HepG2 (cell line): ENCODE measurements at regions of chr1 and their contacts with region 1.

Region 1: DNA sequence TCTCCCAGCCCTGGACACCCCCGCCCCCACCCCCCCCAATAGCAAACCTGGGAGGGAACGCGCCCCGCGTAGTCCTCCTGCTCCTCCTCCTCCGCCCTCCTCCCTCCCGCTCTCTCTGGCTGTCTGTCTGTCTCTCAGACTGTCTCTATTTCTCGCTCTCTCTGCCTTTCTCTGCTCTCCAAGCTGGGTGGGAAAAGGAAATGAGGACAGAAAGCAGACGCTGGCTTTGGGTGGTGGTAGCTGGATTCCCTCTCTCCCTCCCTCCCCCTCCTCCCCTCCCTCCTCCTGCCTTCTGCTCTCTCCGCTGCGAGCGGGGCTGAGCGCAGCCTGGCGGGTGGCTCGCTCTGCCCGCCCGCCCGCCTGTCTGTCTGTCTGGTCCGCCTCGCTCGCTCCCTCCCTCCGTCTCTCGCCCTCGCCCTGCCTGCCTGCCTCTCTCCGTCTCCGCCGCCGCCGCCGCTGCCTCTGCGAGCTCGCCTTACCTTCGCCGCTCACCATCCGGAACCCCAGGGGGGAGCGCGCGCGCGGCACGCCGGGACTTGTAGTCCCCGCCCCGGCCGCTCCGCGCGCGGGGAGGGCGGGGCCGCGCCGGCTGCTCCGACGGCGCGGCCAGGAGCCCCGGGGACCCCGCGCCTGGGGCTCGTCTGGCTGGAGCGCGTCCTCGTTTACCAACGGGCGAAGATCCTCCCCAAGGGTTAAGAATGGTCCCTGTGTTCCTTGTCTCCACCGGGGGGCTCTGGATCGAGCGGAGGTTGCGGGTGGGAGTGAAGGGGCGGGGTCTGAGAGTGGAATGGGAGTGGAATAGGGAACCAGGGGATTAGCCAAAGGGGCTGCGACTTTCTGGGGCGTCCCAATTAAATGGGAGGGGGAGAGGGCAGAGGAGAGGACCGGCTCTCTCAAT is at the start of gene AHDC1:
- DNase-seq: peak; percentile 74
- ATAC-seq: peak; percentile 52
- H3K4me3 ChIP-seq: peak within 1 kb of the TSS; percentile 66 to 86 (median 83)
- H3K27ac ChIP-seq: peak within 1 kb of the TSS; percentile 47
- H3K4me1 ChIP-seq: peaks cover 80% of the 10 kb centered on the region
- H3K27me3 ChIP-seq: no peaks in the 10 kb centered on the region; a peak in 1 of 5 replicates
- CTCF ChIP-seq: peak; percentile 38
- EP300 ChIP-seq: no peak
- POLR2A ChIP-seq: no peak
- RAD21 ChIP-seq: peak; percentile 45; the same call in 1 of the 2 replicates
- total RNA-seq, gene AHDC1: 2.6 and 2.7 TPM in 2 replicates

Region 2: GRCh38 chr1:27392096-27392777 is 211.7 kb before region 1 on chr1 and contains the start of gene GPR3:
- CTCF ChIA-PET with region 1: interaction called, 6 read pairs
- POLR2A ChIA-PET with region 1: interaction called, 6 read pairs
- in situ Hi-C with region 1: loop called (anchors 5 kb)
- intact Hi-C with region 1: loop called (anchors 2 kb)
- DNase-seq: peak; percentile 79
- ATAC-seq: peak; percentile 84
- H3K4me3 ChIP-seq: peak within 1 kb of the TSS; percentile 71 to 85 (median 72)
- H3K27ac ChIP-seq: peak within 1 kb of the TSS; percentile 9
- H3K4me1 ChIP-seq: peaks cover 28% of the 10 kb centered on the region
- H3K27me3 ChIP-seq: peaks cover 0 to 1% of the 10 kb centered on the region in 2 experiments; a peak in 2 of 5 replicates
- CTCF ChIP-seq: peak; percentile 89
- EP300 ChIP-seq: 0 out of 4 replicates have a peak, but pooled peaks of 1 of the 2 experiments have one; percentile 13
- POLR2A ChIP-seq: no peak; a peak in 1 of 4 replicates
- RAD21 ChIP-seq: no peak
- total RNA-seq, gene GPR3: 0.88 and 1.00 TPM in 2 replicates

Region 3: DNA sequence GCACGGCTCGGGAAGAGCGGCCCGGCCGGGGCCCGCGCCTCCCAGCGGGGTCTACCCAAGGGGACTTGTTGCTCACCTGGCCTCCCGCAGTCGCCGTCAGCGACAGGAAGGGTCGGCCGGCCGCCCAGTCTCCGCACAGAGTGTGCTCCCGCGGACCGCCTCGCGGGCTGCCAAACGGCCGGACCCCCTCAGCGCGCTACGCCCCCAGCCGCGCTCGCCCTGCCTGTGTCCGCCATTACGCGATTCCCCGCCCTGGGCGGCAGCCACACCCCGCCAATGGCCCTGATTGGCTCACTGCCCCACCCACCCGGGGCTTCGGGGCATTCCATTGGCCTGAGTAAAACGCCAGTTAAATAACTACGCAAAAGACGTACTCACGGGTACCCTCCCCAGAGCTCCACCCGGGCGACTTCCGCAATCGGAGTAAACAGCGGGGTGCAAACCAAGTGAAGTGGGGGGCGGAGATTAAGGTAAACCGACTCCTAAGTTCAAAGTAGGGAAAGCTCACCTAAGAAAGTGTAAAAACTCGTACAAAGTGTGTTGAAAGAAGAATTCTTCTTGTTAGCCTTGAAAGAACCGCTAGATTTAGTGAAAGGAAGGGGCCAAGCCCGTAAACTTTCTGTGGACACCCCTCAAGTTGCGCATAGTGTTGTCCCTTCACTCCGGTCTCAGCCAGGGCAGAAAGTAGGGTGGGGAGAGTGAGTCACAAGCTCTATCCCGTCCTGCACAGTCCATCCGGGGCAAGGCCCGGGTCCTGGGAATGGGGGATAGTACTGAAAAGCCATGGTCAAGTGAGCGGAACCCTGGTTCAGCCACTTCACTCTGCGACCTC is 113.8 kb before region 1 on chr1 and contains the start of gene WASF2:
- CTCF ChIA-PET with region 1: no interaction called
- POLR2A ChIA-PET with region 1: interaction called, 11 read pairs
- in situ Hi-C with region 1: no loop called
- intact Hi-C with region 1: no loop called
- DNase-seq: peak; percentile 95
- ATAC-seq: peak; percentile 94
- H3K4me3 ChIP-seq: peak within 1 kb of the TSS; percentile 69 to 95 (median 93)
- H3K27ac ChIP-seq: peak within 1 kb of the TSS; percentile 98
- H3K4me1 ChIP-seq: peaks cover 48% of the 10 kb centered on the region
- H3K27me3 ChIP-seq: no peaks in the 10 kb centered on the region; a peak in 1 of 5 replicates
- CTCF ChIP-seq: 0 out of 2 replicates have a peak, but pooled peaks have one; percentile 18
- EP300 ChIP-seq: no peak
- POLR2A ChIP-seq: peak; percentile 72 to 92
- RAD21 ChIP-seq: peak; percentile 47; the same call in 1 of the 2 replicates
- total RNA-seq, gene WASF2: 10.4 and 16.9 TPM in 2 replicates

Region 4: DNA sequence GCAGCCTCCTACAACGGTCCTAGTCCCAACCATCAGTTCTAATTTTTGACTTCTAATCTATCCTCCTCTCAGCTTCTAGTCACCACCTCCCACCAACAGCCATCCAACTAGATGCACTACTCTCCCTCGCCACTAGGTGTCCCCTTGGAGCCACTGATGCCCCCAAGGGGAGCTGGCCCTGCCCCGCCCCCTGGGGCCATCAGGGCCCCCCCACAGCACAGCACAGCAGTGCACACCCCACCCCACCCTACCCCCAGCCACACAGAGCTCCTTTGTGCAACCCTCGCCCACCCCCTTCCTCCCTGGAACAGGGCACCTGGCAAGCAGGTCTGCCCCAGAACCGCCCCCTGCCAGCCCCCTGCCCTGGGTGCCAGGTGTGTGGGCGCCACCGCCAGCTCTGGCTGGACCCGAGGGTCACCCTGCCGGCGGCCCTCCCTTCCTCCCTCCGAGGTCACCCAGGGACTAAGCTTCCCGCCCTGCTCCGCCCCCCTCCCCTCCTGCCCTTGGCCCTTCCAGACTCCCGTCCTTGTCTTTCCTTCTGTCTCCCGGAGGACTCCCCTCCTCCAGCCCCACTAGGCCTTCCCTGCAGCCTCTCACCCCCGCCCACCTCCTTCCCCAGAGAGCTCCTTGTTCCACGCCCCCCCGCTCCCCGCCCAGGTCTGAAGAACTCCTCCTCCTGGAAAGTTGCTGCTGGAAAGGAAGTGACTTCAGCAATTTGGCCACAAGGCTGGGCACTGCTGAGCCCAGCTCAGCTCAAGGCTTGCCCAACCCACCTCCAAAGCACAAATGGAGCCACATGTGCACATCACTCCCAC is 46.9 kb before region 1 on chr1:
- CTCF ChIA-PET with region 1: interaction called, 24 read pairs
- POLR2A ChIA-PET with region 1: interaction called, 26 read pairs
- in situ Hi-C with region 1: loop called (anchors 5 kb)
- intact Hi-C with region 1: loop called (anchors 1 kb)
- DNase-seq: peak; percentile 51
- ATAC-seq: peak; percentile 37
- H3K4me3 ChIP-seq: no peak overlapping the region
- H3K27ac ChIP-seq: peak overlapping the region; percentile 33
- H3K4me1 ChIP-seq: peaks cover 61% of the 10 kb centered on the region
- H3K27me3 ChIP-seq: no peaks in the 10 kb centered on the region
- CTCF ChIP-seq: peak; percentile 88
- EP300 ChIP-seq: no peak
- POLR2A ChIP-seq: no peak
- RAD21 ChIP-seq: peak; percentile 82

Region 5: GRCh38 chr1:27574871-27575831 is 28.8 kb before region 1 on chr1:
- CTCF ChIA-PET with region 1: no interaction called
- POLR2A ChIA-PET with region 1: interaction called, 30 read pairs
- in situ Hi-C with region 1: no loop called
- intact Hi-C with region 1: no loop called
- DNase-seq: no peak
- ATAC-seq: peak; percentile 32
- H3K4me3 ChIP-seq: peak overlapping the region; percentile 53 to 61 (median 60); a peak in 5 of 6 replicates
- H3K27ac ChIP-seq: peak overlapping the region; percentile 68
- H3K4me1 ChIP-seq: peaks cover 73% of the 10 kb centered on the region
- H3K27me3 ChIP-seq: no peaks in the 10 kb centered on the region
- CTCF ChIP-seq: peak; percentile 50
- EP300 ChIP-seq: no peak
- POLR2A ChIP-seq: no peak
- RAD21 ChIP-seq: no peak